AG04450 (cell line): ENCODE measurements at regions of chr4 and their contacts with region 1.

Region 1: DNA sequence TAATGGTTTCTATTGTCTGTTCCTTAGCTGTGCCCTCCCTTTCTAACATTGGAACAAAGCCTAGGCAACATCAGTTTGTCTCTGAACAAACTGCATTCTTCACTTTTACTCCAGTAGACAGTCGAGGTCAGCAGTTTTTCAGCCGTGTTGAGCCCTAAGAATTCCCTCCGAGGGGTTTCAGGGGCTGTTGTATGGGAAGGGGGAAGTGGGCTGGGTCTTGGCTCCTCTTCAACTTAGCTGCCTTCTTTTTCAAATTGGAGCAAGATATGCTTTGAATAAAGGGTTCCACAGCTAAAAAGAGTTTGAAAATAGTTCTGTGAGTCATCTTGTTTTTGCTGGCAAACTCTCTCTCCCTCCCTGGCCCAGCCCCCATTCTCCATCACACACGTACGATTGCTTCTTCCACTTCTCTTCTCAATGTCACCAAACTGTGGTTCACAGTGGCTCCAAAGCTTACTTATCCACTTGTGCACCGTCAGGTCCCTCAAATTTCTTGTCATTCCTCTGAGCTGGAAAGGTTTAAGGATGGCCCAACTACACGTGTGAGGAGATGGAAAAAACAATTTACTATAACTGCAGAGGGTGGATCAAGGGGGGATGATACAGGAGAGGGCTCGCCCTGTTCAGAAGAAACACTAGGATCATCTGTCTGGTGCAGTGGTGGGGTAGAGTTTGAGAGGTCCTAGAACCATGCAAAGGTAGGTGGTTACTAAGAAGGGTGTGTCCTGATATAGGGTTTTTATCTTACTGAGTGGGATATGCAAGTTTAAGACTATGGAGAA is 9.2 kb upstream of the MAML3 start:
- DNase-seq: no peak
- H3K4me3 ChIP-seq: no peak overlapping the region
- H3K27ac ChIP-seq: peak overlapping the region; percentile 62
- H3K27me3 ChIP-seq: no peaks in the 10 kb centered on the region
- CTCF ChIP-seq: no peak

Region 2: DNA sequence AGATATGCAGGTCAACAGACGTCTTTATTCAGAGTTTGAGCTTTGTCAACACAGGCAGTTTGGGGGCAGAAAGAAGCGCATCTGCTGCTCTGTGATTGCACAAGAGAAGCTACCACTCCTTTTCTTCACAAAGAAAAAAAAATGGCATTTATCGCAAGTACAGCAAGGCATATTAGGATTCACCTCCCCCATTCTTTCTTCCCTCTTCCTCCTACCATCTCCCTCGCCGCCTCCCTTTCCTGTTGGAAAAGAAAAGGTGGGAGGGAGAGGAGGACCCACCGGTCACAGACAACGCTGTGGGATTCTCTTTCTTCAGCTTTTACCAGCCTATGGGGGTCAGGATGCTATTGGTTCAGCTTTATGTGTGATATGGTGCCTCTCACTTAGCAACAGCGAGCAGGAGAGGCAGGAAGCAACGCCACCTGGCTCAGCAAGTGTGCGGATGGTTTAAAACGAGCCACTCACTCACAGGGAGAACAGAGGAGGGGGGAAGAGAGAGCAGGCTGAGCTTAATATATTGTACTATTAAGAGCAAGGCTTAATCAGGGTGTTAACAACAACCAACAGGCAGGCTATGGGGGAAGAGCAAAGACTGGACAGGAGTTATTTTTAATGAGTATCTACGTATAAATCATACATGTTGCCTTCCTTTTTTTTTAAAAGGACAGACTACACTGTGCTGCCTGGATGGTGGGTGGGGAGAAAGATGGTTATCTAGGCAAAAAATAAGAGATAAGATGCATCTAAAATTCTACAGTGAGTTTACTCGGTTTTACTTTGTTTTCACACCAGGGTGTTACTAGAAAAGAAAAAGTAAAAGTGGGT is 114.0 kb before region 1 on chr4:
- CTCF ChIA-PET with region 1: interaction called, 10 read pairs
- POLR2A ChIA-PET with region 1: no interaction called
- DNase-seq: no peak
- H3K4me3 ChIP-seq: peak overlapping the region; percentile 49
- H3K27ac ChIP-seq: peak overlapping the region; percentile 65
- H3K27me3 ChIP-seq: no peaks in the 10 kb centered on the region
- CTCF ChIP-seq: no peak